Psoas muscle (tissue), 8 donors: ENCODE measurements at regions of chr2 and their contacts with region 1.

Region 1: GRCh38 chr2:46666044-46666679 is 186.8 kb downstream of the TMEM247 start:
- DNase-seq: peak; percentile 70 to 78
- ATAC-seq: peak in 3 of 4 donors; percentile 13 to 50 (median 27)
- H3K4me3 ChIP-seq: no peak overlapping the region
- H3K27ac ChIP-seq: no peak overlapping the region
- H3K4me1 ChIP-seq: peaks cover 17% of the 10 kb centered on the region
- H3K27me3 ChIP-seq: no peaks in the 10 kb centered on the region
- CTCF ChIP-seq: no peak

Region 2: GRCh38 chr2:46679761-46680160 is 13.6 kb after region 1 on chr2:
- intact Hi-C with region 1: loop called in 1 of 2 experiments (anchors 1 kb)
- DNase-seq: no peak
- ATAC-seq: no peak
- H3K4me3 ChIP-seq: no peak overlapping the region
- H3K27ac ChIP-seq: no peak overlapping the region
- H3K4me1 ChIP-seq: no peaks in the 10 kb centered on the region
- H3K27me3 ChIP-seq: no peaks in the 10 kb centered on the region
- CTCF ChIP-seq: no peak

Region 3: GRCh38 chr2:46776687-46777327 is 110.6 kb after region 1 on chr2:
- intact Hi-C with region 1: loop called in 1 of 2 experiments (anchors 10 kb)
- DNase-seq: no peak
- ATAC-seq: peak in 2 of 4 donors; percentile 47 to 59
- H3K4me3 ChIP-seq: no peak overlapping the region
- H3K27ac ChIP-seq: no peak overlapping the region
- H3K4me1 ChIP-seq: peaks cover 28% of the 10 kb centered on the region
- H3K27me3 ChIP-seq: no peaks in the 10 kb centered on the region
- CTCF ChIP-seq: peak; percentile 58